ENCODE measurements at regions of chr17 and their contacts with region 1.

Region 1: DNA sequence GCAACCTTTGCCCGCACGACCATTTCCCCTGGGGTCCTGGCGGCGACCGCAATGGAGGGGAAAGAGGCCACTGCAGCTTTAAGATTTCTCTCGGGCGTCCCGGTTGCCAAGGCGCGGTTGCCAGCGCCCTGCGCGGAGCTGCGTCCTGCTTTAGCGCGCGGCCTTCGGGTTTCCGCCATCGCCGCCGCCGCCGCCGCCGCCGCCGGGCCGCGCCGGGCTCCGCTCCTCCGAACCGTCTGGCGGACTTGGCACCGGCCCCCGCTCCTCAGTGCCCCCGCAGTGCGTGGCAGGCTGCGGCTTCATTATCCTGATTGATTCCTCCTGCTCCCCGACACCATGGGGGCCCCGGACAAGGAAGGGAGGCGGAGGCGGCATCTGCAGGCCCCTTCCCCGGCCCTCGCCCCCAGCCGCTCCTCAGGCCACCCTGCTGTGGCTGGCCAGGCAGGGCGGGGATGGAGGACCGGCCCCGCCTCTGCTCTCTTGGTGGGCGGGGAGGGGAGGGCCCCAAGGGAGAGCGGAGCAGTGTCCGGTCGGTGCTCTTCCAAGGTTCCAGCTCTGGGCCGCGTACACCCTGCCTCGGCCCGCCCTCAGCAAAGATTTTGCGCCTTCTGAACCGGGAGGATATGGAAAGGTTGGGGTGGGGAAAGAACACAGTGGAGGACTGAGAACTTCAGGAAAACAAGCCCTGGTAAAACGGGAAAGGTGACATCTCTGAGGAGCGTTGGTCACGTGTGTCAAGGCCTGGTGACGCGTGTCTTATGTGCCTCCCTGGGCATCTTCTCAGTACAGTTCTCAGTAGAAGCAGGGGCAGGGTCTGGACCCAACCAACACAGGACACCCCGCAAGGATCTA is 34.0 kb downstream of the NEUROD2 start:
- DNase-seq: peak in 1 of 2 experiments; percentile 84
- H3K4me3 ChIP-seq: peak overlapping the region; percentile 48 to 85 (median 56)
- H3K27ac ChIP-seq: no peak overlapping the region
- H3K4me1 ChIP-seq: peaks cover 2 to 12% (median 5%) of the 10 kb centered on the region in 4 experiments
- H3K27me3 ChIP-seq: peaks cover 0 to 4% (median 3%) of the 10 kb centered on the region in 4 experiments; a peak in 5 of 7 replicates
- CTCF ChIP-seq: no peak
- EP300 ChIP-seq: peak in 1 of 2 experiments; percentile 50; a peak in 1 of 3 replicates
- POLR2A ChIP-seq: no peak; a peak in 1 of 3 replicates
- RAD21 ChIP-seq: no peak

Region 2: DNA sequence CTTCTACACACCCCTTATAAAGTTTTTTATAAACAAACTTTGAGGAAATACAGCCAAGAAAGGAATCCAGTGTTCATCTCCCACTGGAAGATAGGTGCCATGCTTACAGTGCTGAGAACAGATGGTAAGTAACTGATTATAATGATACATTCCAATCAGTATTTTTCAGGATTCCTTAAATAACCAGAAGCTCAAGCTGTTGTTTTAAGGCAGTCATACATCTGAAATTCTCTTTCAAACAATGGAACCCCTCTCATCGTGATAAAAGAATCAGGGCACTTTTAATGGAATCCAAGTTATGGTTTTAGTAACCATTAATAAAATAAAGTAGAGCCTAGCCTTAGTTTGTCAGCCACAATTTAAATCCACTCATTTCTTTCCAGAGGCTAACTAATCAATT is 291.9 kb before region 1 on chr17:
- CTCF ChIA-PET with region 1: no interaction called
- POLR2A ChIA-PET with region 1: no interaction called
- DNase-seq: no peak
- H3K4me3 ChIP-seq: no peak overlapping the region
- H3K27ac ChIP-seq: no peak overlapping the region
- H3K4me1 ChIP-seq: peaks cover 0 to 2% (median under 1%) of the 10 kb centered on the region in 4 experiments; a peak in 2 of 7 replicates
- H3K27me3 ChIP-seq: no peaks in the 10 kb centered on the region
- CTCF ChIP-seq: no peak
- EP300 ChIP-seq: no peak
- POLR2A ChIP-seq: no peak
- RAD21 ChIP-seq: no peak

Region 3: DNA sequence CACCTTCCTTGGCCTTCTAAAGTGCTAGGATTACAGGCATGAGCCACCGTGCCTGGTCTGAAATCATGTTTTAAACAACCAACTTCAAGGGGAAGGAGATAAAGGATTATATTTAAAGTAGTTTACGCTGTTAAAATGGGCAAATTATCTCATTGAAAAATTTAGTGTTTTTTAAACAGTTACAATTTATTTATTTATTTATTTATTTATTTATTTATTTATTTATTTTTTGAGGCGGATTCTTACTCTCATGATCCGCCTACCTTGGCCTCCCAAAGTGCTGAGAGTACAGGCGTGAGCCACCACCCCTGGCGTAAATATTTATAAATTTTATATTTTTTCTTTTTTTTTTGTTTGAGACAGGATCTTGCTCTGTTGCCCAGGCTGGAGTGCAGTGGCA is 90.2 kb before region 1 on chr17:
- CTCF ChIA-PET with region 1: no interaction called
- POLR2A ChIA-PET with region 1: no interaction called
- DNase-seq: no peak
- H3K4me3 ChIP-seq: no peak overlapping the region
- H3K27ac ChIP-seq: no peak overlapping the region
- H3K4me1 ChIP-seq: no peaks in the 10 kb centered on the region
- H3K27me3 ChIP-seq: no peaks in the 10 kb centered on the region
- CTCF ChIP-seq: no peak
- EP300 ChIP-seq: no peak
- POLR2A ChIP-seq: no peak
- RAD21 ChIP-seq: no peak

Region 4: GRCh38 chr17:39556427-39556826 is 17.2 kb before region 1 on chr17:
- CTCF ChIA-PET with region 1: interaction called, 216 read pairs
- POLR2A ChIA-PET with region 1: interaction called, 4 read pairs
- DNase-seq: no peak
- H3K4me3 ChIP-seq: no peak overlapping the region
- H3K27ac ChIP-seq: no peak overlapping the region
- H3K4me1 ChIP-seq: peaks cover 0 to 10% (median 4%) of the 10 kb centered on the region in 4 experiments; a peak in 4 of 7 replicates
- H3K27me3 ChIP-seq: no peaks in the 10 kb centered on the region
- CTCF ChIP-seq: no peak
- EP300 ChIP-seq: no peak
- POLR2A ChIP-seq: no peak
- RAD21 ChIP-seq: no peak

Region 5: GRCh38 chr17:39563476-39563875 is 10.2 kb before region 1 on chr17:
- CTCF ChIA-PET with region 1: interaction called, 120 read pairs
- POLR2A ChIA-PET with region 1: interaction called, 12 read pairs
- DNase-seq: peak in 1 of 2 experiments; percentile 62
- H3K4me3 ChIP-seq: peak overlapping the region in 1 of 4 experiments; percentile 26; a peak in 3 of 8 replicates
- H3K27ac ChIP-seq: peak overlapping the region; percentile 29
- H3K4me1 ChIP-seq: peaks cover 4 to 7% (median 6%) of the 10 kb centered on the region in 4 experiments; a peak in 5 of 7 replicates
- H3K27me3 ChIP-seq: no peaks in the 10 kb centered on the region
- CTCF ChIP-seq: no peak
- EP300 ChIP-seq: no peak
- POLR2A ChIP-seq: no peak; a peak in 1 of 3 replicates
- RAD21 ChIP-seq: no peak

Region 6: DNA sequence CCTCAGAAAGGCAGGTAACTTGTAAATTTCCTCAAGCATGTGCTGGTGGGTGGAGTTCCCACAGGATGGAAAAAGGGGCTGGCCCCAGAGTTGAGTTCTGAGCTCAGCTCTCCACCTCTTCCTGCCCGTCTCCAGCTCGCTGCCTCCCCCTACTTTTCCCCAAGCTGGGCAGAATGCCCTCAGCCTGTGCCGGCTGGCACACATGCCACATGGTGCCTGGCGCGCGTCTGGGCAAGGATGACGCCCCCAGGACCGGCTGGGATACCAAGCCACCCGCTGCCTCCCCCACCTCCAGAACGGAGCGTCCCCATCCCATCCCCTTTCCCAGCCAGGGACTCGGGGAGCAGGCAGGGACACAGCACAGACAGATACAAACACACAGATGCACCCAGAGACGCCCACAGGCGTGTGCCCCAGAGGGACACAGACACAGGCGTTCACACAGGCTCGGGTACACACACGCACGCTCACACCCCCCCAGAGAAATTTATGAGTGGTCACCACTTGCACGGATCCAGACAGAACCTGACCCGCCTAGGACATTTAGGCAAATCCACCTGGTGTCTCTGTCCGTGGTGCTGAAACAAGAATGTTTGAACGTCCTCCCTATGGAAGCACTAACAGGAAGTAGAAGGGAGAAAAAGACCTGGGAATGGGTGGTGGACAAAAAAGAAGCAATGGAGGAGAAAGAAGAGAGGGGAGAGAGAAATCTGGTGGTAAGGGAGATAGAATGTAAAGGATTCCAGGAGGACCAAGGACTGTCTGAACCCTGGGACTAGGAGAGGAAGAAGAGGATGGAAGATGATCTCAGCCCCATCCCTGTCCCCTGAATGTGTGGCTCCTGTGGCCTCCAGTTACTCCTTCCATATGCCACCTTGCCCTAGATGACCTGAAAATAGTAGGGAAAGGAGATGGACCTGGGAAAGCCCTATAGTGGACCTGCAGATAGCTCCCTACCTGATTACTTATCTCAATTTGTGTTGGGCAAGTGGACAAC is 18.6 kb after region 1 on chr17:
- CTCF ChIA-PET with region 1: interaction called, 20 read pairs
- POLR2A ChIA-PET with region 1: interaction called, 3 read pairs
- DNase-seq: peak in 1 of 2 experiments; percentile 90
- H3K4me3 ChIP-seq: peak overlapping the region in 2 of 4 experiments; percentile 23 to 44; a peak in 5 of 8 replicates
- H3K27ac ChIP-seq: no peak overlapping the region
- H3K4me1 ChIP-seq: peaks cover 5 to 29% (median 17%) of the 10 kb centered on the region in 4 experiments
- H3K27me3 ChIP-seq: peaks cover 23 to 50% (median 47%) of the 10 kb centered on the region in 4 experiments
- CTCF ChIP-seq: no peak
- EP300 ChIP-seq: no peak
- POLR2A ChIP-seq: no peak
- RAD21 ChIP-seq: no peak

Region 7: DNA sequence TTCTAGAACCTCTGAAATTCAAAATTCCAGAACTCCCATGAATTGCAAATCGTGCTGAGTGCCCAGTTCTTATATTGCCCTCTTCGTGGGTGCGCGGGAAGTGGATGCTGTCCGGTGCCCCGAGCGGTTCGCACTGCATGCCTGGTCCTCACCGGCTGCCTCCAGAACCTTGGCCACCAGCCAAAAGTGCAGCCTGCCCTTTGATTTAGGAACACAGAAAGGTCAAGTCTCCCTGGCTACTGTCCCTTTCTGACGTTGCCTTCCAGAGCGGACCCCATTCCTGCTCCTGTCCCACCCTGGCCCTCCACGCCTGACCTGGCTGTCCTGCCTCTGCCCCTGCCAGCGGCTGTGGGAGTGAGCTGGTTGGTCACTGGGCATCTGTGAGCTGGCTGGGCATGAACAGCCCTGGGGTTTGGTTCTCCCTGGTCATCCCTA is 24.4 kb after region 1 on chr17:
- CTCF ChIA-PET with region 1: interaction called, 15 read pairs
- POLR2A ChIA-PET with region 1: interaction called, 3 read pairs
- DNase-seq: peak in 1 of 2 experiments; percentile 52
- H3K4me3 ChIP-seq: no peak overlapping the region
- H3K27ac ChIP-seq: no peak overlapping the region
- H3K4me1 ChIP-seq: peaks cover 5 to 39% (median 30%) of the 10 kb centered on the region in 4 experiments
- H3K27me3 ChIP-seq: peaks cover 78 to 100% (median 97%) of the 10 kb centered on the region in 4 experiments
- CTCF ChIP-seq: no peak
- EP300 ChIP-seq: no peak
- POLR2A ChIP-seq: no peak
- RAD21 ChIP-seq: no peak